HEK293T (cell line): ENCODE measurements at regions of chr1 and their contacts with region 1.

Region 1: DNA sequence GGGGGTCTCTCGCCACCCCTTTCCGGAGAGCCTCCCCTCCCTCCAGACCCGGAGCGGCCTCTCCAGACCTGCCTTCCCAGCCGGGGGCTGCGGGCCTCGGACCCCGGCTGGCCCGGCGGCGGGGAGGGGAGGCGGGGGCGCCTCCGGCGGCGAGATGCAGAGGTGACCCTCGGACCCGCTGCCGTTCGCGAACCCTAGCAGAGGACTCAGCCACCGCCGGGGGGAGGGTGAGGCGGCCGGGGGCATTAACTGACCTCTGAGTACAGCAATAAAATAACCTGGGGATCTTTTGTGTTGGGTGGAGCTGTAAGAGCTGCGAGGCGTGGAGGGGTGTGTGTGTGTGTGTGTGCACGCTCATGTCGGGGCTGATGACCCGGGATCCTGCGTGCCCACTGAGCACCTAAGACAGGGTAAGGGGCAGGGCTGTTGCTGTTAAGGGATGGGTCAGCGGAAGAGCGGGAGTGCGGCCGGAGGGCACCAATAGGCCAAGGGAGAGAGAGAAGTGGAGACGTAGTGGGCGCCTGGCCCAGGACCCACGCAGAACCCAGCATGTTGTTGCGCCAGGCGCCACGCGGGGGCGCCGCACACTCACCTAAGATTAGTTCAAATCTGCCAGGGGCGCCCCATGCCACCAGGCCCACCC is 6.3 kb downstream of the HAPLN2 start:
- DNase-seq: peak; percentile 73

Region 2: GRCh38 chr1:156465747-156466365 is 159.7 kb before region 1 on chr1:
- CTCF ChIA-PET with region 1: no interaction called
- POLR2A ChIA-PET with region 1: no interaction called
- DNase-seq: no peak

Region 3: DNA sequence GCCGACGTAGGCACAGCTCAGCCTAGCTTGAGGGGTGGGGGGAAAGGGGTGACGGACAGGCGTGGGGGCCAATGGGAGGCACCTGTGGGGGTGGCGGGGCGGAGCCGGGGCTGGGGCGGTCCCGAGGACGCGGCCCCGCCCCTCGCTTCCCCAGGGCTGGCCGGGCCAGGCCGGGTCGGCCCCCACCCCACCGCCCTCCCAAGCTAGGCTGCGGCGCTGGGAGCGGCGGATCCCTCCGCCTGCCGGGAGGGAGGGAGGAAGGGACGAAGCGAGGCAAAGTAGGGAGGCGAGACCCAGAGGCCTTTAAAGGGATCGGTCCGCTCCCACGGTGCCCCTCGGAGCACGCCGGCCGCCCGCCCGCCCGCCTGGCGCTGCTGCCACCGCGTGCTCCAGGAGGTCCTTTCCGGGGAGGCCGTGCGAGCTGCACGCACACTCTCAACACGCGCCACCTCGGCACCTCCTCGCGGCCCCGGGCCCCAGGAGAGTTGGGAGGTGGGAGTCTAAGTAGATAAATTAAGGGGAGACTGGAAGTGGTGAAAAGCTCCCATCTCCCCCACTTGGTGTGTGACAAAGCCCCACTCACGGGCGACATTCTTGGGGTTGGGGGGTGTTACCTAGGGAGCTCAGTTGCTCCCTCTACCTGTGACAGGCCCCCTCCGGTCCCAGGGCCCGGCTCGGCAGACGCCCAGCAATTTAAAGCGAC is 124.6 kb before region 1 on chr1:
- CTCF ChIA-PET with region 1: interaction called, 3 read pairs
- POLR2A ChIA-PET with region 1: interaction called, 10 read pairs
- DNase-seq: peak; percentile 99

Region 4: GRCh38 chr1:156591432-156592157 is 34.0 kb before region 1 on chr1 and contains the start of gene NAXE:
- CTCF ChIA-PET with region 1: interaction called, 11 read pairs
- POLR2A ChIA-PET with region 1: interaction called, 33 read pairs
- DNase-seq: peak; percentile 87

Region 5: GRCh38 chr1:156641761-156642264 is 16.3 kb after region 1 on chr1 and contains the start of gene BCAN:
- CTCF ChIA-PET with region 1: interaction called, 47 read pairs
- POLR2A ChIA-PET with region 1: interaction called, 7 read pairs
- DNase-seq: peak; percentile 80

Region 6: DNA sequence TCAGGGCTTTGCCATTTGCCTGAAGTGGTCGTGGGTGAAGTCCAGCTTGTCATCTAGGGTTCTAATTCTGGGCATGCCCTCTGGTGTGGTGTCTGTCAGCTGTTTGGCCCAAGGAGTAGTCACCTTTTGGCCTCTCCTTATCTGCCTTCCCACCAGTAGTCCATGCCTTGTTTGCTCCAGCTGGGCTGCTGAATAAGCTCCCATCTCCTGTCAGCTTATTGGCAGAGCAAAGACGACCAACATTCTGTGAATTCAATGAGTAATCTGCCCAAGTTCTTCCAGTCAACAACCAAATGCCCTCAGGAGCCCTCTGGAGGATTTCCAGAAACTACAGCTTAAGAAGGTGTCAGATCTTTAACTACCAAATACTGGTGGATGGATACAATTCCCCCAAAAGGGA is 23.4 kb after region 1 on chr1:
- CTCF ChIA-PET with region 1: interaction called, 47 read pairs
- POLR2A ChIA-PET with region 1: interaction called, 7 read pairs
- DNase-seq: no peak

Region 7: DNA sequence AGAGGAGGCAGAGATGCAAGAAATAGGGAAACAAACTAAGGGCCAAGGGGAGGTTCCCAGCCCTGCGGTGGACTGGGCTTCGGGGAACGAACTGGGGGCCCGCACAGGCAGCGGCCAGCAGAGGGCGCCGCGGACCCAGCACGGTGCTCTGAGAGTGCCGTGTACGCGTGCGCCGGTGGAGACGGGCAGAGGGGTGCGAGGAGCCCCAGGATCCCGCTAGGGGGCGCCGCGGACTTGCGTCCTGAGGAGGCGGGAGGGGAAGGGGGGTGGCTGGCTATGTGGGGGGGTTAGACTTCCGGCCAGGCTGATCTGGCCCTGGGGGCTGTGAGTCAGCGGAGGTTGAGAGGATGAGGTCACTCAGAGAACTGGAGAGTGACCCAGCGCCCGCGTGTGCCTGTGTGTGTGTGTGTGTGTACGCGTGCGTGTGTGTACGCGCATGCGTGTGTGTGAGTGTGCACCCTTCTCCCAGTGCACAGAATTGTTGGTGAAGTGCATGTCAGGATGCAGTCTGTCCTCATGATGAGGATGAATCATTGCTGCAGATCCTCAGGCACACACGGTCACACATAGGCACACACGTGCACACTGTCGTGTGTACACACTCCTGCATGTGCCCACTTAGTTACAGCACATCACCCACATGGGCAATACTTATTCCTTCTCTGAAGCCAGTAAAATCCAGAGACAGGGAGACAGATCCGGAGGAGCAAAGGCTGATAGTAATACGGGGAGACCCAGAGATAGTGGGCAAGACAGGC is 34.6 kb after region 1 on chr1:
- CTCF ChIA-PET with region 1: interaction called, 97 read pairs
- POLR2A ChIA-PET with region 1: interaction called, 25 read pairs
- DNase-seq: peak; percentile 100

Region 8: GRCh38 chr1:156677616-156678596 is 52.3 kb after region 1 on chr1:
- CTCF ChIA-PET with region 1: interaction called, 36 read pairs
- POLR2A ChIA-PET with region 1: interaction called, 7 read pairs
- DNase-seq: peak; percentile 80